Activated CD4-positive, alpha-beta memory T cell treated with anti-CD3 and anti-CD28 coated beads, Interleukin-2, amount 10 ng/mL, durations not matched to agents 7 days and 5 days (primary cell): ENCODE measurements at regions of chr2 and their contacts with region 1.

Region 1: DNA sequence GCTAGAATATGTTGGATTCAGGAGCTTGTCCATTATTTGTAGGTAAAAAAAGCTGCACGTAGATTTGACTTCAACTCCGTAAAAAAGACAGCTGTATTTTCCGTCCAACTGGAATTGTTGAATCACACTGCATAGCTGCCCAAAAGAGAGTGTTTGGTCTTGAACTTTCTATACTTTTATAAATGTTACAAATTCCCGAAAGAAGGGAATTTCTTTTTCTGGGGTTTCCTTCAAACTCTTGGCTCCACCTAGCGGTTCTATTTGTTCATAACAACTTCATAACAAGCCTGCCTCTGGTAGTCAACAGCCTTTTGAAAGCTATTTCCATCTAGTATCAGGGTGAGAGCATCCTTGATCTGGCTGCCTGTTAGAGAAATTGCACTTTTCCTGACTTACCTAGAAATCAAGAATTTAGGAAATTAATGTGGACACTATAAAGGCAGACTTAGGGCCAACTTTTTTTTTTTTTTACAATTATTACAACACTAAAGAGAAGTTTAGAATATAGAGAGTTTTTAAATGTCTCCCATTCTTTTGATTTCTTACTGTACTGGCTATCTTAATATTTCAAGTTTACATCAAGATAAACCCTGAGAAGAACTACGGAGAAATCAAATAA is 48.1 kb downstream of the TMEM185B start:
- DNase-seq: no peak
- H3K4me3 Mint-ChIP-seq: no peak overlapping the region
- H3K27ac Mint-ChIP-seq: peak overlapping the region; percentile 28
- H3K4me1 Mint-ChIP-seq: peaks cover 48% of the 10 kb centered on the region
- H3K27me3 Mint-ChIP-seq: no peaks in the 10 kb centered on the region

Region 2: GRCh38 chr2:119641562-119642258 is 533.4 kb before region 1 on chr2:
- CTCF ChIA-PET with region 1: interaction called, 26 read pairs
- POLR2A ChIA-PET with region 1: no interaction called
- DNase-seq: peak; percentile 75
- H3K4me3 Mint-ChIP-seq: no peak overlapping the region
- H3K27ac Mint-ChIP-seq: no peak overlapping the region
- H3K4me1 Mint-ChIP-seq: peaks cover 1% of the 10 kb centered on the region
- H3K27me3 Mint-ChIP-seq: peaks cover 8% of the 10 kb centered on the region

Region 3: DNA sequence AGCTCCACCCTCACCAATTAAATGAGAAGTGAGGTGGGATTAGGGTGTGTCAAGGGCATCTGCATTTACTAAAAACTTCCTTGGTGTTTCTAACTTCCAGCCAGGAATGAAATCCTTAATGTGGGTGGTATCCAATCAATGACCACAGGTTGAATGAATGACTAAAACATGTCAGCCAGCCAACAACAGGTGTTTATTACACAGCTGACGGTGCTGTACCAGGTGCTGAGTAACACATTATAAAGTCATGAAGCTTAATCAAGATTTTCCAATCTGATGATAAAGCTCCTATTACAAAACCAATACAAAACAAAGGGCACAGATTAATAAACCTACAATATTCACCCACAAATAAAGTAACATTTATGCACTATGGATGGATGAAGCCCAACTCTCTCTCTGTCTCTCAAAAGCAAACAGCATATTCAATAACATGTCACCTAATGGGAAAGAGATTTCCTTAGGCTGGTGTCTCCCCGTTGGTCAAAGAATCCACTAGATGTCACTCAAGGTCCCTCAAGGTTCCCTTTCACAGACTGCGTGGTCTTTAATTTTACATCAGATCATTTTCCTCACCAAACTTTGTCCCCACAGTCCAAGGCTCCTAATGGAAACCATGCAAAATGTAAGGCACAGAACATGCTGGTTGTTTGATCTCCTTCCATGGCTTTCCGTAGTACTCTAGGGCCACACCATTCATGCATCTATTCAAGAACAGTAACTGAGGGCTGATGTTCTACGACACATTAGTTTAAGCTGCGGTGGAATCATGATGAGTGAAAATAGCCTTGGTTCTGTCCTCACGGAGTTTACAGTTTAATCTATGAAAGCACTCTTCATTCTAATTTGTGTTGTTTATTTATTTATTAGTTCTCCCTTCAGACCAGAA is 421.8 kb before region 1 on chr2:
- CTCF ChIA-PET with region 1: interaction called, 59 read pairs
- POLR2A ChIA-PET with region 1: interaction called, 14 read pairs
- DNase-seq: peak; percentile 24
- H3K4me3 Mint-ChIP-seq: no peak overlapping the region
- H3K27ac Mint-ChIP-seq: no peak overlapping the region
- H3K4me1 Mint-ChIP-seq: peaks cover 6% of the 10 kb centered on the region
- H3K27me3 Mint-ChIP-seq: peaks cover 11% of the 10 kb centered on the region

Region 4: GRCh38 chr2:119873350-119874315 is 301.4 kb before region 1 on chr2:
- CTCF ChIA-PET with region 1: no interaction called
- POLR2A ChIA-PET with region 1: no interaction called
- DNase-seq: no peak
- H3K4me3 Mint-ChIP-seq: no peak overlapping the region
- H3K27ac Mint-ChIP-seq: no peak overlapping the region
- H3K4me1 Mint-ChIP-seq: peaks cover 8% of the 10 kb centered on the region
- H3K27me3 Mint-ChIP-seq: no peaks in the 10 kb centered on the region

Region 5: DNA sequence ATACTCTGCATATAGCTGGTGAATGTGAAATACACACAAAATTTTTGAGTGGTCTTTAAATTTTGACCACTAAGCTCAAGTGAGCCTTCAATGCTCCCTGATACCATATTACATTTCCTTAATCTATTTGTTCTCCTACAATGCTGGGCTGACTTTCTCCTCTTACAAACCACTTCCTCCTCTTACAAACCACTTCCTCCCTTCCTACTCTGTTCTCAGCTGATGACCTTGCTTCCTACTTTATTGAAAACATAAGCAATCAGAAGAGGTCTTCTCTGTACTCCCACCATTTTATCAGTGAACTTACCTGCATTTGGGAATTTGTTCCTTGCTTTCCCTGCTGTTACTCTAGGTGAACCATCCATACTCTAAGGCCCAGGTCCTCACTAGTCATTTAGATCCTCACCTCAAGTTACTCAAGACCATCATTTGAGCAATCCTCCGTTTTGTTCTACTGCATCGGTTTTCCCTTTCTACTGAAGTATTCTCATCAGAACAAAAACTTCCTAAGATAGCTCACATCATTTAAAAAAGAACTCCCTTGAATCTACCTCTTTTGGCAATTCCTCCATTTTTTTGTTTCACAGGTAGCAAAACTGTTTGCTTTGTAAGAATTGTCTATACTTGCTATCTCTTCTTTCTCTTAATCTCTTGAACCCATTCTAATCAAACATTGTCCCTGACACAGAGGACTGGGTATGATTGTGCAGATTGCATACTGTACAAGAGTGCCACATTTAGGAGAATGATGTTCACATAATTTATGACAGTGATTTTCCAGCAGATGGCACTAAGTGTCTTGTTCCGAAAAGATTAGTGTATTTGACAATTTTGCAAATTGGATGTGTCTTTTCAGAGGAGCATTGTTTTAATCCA is 65.6 kb before region 1 on chr2:
- CTCF ChIA-PET with region 1: interaction called, 73 read pairs
- POLR2A ChIA-PET with region 1: interaction called, 9 read pairs
- DNase-seq: no peak
- H3K4me3 Mint-ChIP-seq: peak overlapping the region; percentile 38
- H3K27ac Mint-ChIP-seq: peak overlapping the region; percentile 32
- H3K4me1 Mint-ChIP-seq: peaks cover 17% of the 10 kb centered on the region
- H3K27me3 Mint-ChIP-seq: peaks cover 27% of the 10 kb centered on the region

Region 6: DNA sequence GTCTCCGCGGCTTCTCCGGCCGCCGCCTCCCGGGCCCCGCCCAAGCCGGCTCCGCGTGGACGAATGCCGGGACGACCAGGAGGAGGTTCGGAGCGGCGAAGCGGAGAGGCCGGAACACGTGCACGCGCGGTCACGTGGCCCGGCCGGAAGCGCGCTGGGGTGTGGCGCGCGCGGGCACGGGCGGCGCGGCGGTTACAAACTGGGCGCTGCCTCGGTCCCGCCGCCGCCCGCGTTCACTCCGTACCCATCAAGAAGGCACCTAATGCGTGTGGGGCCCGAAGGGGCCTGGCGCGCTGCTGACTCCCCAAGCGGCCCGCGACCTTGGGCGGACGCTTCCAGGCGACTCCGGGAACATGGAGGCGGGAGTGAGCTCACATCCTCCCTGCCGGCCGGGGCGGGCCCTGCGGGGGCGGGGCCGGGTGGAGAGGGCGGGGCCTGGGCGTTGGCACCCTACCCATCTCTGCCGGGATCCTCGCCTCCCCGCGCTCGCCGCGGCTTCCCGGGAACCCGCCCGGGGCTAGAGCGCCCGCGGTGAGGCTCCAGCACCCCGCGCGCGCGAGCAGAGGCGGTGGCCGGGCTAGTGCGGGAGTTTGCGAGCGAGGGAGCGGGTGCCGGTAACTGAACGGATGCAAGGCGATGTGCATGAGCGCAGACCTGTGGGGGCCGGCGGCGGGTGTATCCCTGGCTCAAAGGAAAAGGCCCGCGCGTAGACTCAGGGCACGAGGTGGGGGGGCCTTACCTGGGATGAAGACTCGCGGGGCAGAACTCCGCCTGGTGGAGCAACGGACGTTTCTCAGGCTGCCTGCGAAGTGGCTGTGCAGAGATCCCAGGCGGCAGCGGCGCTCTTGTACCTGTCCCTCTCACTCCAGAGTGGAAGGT is 48.2 kb after region 1 on chr2 and contains the start of gene TMEM185B:
- CTCF ChIA-PET with region 1: interaction called, 14 read pairs
- POLR2A ChIA-PET with region 1: interaction called, 4 read pairs
- DNase-seq: peak; percentile 93
- H3K4me3 Mint-ChIP-seq: peak within 1 kb of the TSS; percentile 78
- H3K27ac Mint-ChIP-seq: peak within 1 kb of the TSS; percentile 83
- H3K4me1 Mint-ChIP-seq: peaks cover 65% of the 10 kb centered on the region
- H3K27me3 Mint-ChIP-seq: no peaks in the 10 kb centered on the region
- total RNA-seq, gene TMEM185B: 19.2 to 21.8 TPM

Region 7: DNA sequence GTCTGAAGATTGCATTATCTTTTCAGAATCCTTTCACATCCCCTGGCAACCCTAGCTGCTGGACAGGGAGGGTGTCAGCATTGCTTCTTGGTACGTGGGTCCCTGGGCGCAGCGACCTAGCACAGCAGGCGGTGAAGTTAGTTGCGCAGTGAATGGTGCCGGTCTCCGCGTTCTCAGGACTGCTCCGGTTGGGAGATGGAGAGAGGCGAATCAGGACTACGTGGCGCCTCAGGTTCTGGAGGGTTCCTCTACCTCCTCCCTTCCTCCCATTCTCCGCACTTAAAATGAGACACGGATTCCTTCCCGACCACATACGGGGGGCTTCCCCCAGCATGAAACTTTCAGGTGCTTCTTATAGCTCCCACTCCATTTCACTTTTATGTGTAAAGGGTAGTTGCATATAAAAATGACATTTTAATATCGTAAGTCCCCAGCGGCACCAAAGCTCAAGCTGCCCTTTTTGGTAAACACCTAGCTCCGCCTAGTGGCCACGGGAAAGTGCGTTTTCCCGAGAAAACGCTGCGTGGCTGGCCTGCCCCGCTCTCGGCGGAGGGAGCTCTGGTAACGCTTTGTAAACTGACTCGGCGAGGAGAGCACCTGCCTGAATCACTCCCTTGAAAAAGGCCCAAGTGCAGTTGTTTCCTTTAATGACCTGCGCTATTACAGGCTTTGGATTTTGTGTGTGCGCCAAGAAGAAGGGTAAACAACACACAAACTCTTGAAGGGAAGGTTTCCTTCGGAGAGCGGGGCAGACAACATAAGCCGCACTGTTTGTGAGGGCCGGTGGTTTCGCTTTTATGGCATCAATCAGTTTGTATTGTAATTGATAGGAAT is 138.0 kb after region 1 on chr2:
- CTCF ChIA-PET with region 1: interaction called, 111 read pairs
- POLR2A ChIA-PET with region 1: interaction called, 10 read pairs
- DNase-seq: peak; percentile 82
- H3K4me3 Mint-ChIP-seq: peak overlapping the region; percentile 46
- H3K27ac Mint-ChIP-seq: peak overlapping the region; percentile 56
- H3K4me1 Mint-ChIP-seq: peaks cover 35% of the 10 kb centered on the region
- H3K27me3 Mint-ChIP-seq: no peaks in the 10 kb centered on the region